ENCODE measurements at regions of chr17 and their contacts with region 1.

Region 1: DNA sequence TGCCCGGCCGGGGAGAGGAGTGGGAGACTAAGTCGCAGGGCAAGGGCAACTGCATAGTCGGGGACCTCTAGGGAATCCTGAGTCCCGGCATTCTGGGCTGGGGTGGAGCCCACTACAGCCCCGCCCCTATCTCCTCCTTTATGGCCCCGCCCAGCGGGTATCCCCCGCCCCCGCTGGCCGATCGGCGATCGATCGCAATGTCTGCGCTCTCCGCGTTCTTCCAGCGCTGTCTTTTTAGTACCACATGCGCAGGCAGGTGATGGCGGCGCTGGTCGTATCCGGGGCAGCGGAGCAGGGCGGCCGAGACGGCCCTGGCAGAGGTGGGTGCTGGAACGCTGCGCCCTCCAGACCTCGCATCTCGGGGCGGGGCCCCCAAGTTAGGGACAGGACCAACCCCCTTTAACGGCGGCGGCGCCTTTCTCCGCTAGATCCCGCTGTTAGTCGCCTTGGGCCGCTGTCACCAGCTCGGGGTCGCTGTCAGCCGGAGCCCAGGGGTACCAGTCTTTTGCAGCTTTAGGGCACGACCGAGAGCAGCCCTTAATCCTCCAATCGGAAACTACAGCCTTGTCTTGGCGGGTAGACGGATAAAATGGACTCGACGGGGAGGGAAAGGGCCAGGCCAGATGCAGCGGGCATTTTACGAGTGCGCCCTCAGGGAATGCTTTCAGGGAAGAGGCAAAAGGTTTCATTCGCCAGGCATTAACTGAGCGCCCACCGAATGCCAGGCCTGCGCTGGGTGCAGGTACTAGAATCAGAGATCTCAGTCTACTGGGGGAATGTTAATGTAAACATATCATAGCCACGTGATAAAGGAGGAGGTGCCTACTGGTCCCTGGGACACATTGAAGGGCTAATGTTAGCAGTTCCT is at the start of gene DPH1:
- DNase-seq: peak; percentile 87
- H3K4me3 ChIP-seq: peak within 1 kb of the TSS; percentile 98
- H3K27ac ChIP-seq: peak within 1 kb of the TSS; percentile 78
- H3K4me1 ChIP-seq: peaks cover 51% of the 10 kb centered on the region
- H3K27me3 ChIP-seq: peaks cover 38% of the 10 kb centered on the region
- CTCF ChIP-seq: no peak
- total RNA-seq, gene DPH1: 29.1 TPM

Region 2: DNA sequence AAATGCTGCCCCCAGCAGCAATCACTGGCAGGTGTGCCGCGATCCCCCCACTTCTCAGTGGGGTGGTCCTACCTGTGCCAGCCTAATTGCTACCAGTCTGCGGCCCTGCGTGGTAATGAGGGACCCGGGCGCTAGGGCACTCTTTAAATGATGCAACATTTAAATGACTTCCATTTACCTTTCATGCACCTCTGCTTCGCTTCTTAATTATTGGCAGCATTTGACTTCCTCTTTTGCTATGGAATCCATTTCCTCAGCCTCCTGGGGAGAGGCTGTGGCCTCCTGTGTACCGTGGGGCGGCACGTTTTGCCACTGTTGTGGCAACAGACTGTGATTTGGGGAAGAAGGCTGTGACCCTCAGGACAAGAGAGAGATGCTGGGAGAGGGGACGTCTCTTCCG is 114.3 kb before region 1 on chr17:
- intact Hi-C with region 1: loop called (anchors 10 kb)
- DNase-seq: no peak
- H3K4me3 ChIP-seq: no peak overlapping the region
- H3K27ac ChIP-seq: no peak overlapping the region
- H3K4me1 ChIP-seq: no peaks in the 10 kb centered on the region
- H3K27me3 ChIP-seq: peaks cover 52% of the 10 kb centered on the region
- CTCF ChIP-seq: no peak

Measured in left ventricle myocardium inferior (tissue), 1 donor.